ENCODE measurements at regions of chr6 and their contacts with region 1.

Region 1: GRCh38 chr6:142112451-142113061 is 20.2 kb upstream of the GJE1 start:
- DNase-seq: peak; percentile 58
- ATAC-seq: no peak
- H3K4me3 ChIP-seq: no peak overlapping the region
- H3K4me3 Mint-ChIP-seq: no peak overlapping the region
- H3K27ac ChIP-seq: no peak overlapping the region
- H3K27ac Mint-ChIP-seq: no peak overlapping the region
- H3K4me1 ChIP-seq: no peaks in the 10 kb centered on the region
- H3K4me1 Mint-ChIP-seq: no peaks in the 10 kb centered on the region
- H3K27me3 ChIP-seq: no peaks in the 10 kb centered on the region
- H3K27me3 Mint-ChIP-seq: peaks cover 7% of the 10 kb centered on the region
- CTCF ChIP-seq: peak; percentile 95

Region 2: GRCh38 chr6:141309295-141309694 is 803.3 kb before region 1 on chr6:
- CTCF ChIA-PET with region 1: no interaction called
- POLR2A ChIA-PET with region 1: no interaction called
- intact Hi-C with region 1: loop called (anchors 2 kb)
- DNase-seq: peak; percentile 29
- ATAC-seq: peak; percentile 49
- H3K4me3 ChIP-seq: no peak overlapping the region
- H3K4me3 Mint-ChIP-seq: no peak overlapping the region
- H3K27ac ChIP-seq: no peak overlapping the region
- H3K27ac Mint-ChIP-seq: no peak overlapping the region
- H3K4me1 ChIP-seq: no peaks in the 10 kb centered on the region
- H3K4me1 Mint-ChIP-seq: no peaks in the 10 kb centered on the region
- H3K27me3 ChIP-seq: no peaks in the 10 kb centered on the region
- H3K27me3 Mint-ChIP-seq: no peaks in the 10 kb centered on the region
- CTCF ChIP-seq: peak; percentile 26

Region 3: DNA sequence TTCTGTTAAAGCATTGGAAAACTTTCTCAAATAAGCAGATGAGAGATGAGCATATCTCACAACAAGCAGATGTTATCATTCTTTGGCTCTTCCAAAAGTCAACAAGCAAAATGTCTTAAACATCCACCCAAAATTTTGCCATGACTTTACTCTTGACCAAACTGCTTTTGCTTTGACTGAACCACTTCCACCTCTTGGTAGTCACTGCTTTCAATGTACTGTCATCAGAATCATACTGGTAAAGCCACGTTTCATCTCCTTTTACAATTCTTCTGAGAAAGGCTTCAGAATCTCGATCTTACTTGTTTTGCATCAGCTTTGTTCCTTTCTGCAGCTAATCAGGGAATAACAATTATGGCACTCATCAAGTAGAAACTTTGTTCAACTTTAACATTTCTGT is 478.3 kb before region 1 on chr6:
- CTCF ChIA-PET with region 1: no interaction called
- POLR2A ChIA-PET with region 1: no interaction called
- intact Hi-C with region 1: no loop called
- DNase-seq: no peak
- ATAC-seq: no peak
- H3K4me3 ChIP-seq: no peak overlapping the region
- H3K4me3 Mint-ChIP-seq: no peak overlapping the region
- H3K27ac ChIP-seq: no peak overlapping the region
- H3K27ac Mint-ChIP-seq: no peak overlapping the region
- H3K4me1 ChIP-seq: no peaks in the 10 kb centered on the region
- H3K4me1 Mint-ChIP-seq: no peaks in the 10 kb centered on the region
- H3K27me3 ChIP-seq: no peaks in the 10 kb centered on the region
- H3K27me3 Mint-ChIP-seq: no peaks in the 10 kb centered on the region
- CTCF ChIP-seq: no peak